Mammary epithelial cell (primary cell): ENCODE measurements at regions of chr1 and their contacts with region 1.

Region 1: GRCh38 chr1:62012836-62013235 is 181.8 kb upstream of the L1TD1 start:
- DNase-seq: no peak
- H3K4me3 ChIP-seq: no peak overlapping the region
- H3K27ac ChIP-seq: no peak overlapping the region
- H3K4me1 ChIP-seq: no peaks in the 10 kb centered on the region
- H3K27me3 ChIP-seq: no peaks in the 10 kb centered on the region
- CTCF ChIP-seq: no peak

Region 2: DNA sequence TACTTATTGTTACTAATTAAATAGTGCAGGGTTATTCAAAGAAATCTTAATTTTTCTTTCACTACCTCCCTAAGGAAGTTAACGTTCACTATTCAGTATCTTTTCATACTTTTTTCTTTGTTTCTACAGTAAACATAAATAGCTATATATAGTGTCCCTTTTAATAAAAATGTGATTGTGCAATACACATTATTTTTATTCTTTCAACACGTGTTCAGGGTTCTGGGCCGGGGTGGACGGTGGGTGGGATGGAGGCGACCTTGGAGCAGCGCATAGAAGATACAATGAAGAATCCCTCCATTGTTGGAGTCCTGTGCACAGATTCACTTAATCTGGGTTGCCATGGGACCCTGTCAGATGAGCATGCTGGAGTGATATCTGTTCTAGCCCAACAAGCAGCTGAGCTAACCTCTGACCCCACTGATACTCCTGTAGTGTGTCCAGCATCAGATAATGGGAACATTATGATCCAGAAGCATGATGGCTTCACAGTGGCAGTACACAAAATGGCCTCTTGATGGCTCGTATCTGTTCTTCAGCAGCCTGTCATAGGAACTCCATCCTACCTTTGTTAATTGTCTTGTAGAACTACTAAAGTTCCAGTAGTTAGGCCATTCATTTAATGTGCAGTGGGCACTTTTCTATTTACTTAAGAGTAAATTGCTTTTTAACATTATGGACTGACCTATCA is 25.9 kb after region 1 on chr1:
- CTCF ChIA-PET with region 1: interaction called, 12 read pairs
- dilution Hi-C with region 1: no loop called
- in situ Hi-C with region 1: no loop called
- intact Hi-C with region 1: no loop called
- DNase-seq: no peak
- H3K4me3 ChIP-seq: no peak overlapping the region
- H3K27ac ChIP-seq: no peak overlapping the region
- H3K4me1 ChIP-seq: no peaks in the 10 kb centered on the region
- H3K27me3 ChIP-seq: no peaks in the 10 kb centered on the region
- CTCF ChIP-seq: peak in 1 of 2 donors; percentile 8

Region 3: GRCh38 chr1:62057641-62058295 is 44.9 kb after region 1 on chr1:
- CTCF ChIA-PET with region 1: no interaction called
- dilution Hi-C with region 1: no loop called
- in situ Hi-C with region 1: no loop called
- intact Hi-C with region 1: no loop called
- DNase-seq: no peak
- H3K4me3 ChIP-seq: no peak overlapping the region
- H3K27ac ChIP-seq: no peak overlapping the region
- H3K4me1 ChIP-seq: no peaks in the 10 kb centered on the region
- H3K27me3 ChIP-seq: no peaks in the 10 kb centered on the region
- CTCF ChIP-seq: no peak